ENCODE measurements at regions of chr1 and their contacts with region 1.

Region 1: GRCh38 chr1:186722711-186723309 is 42.6 kb upstream of the PTGS2 start:
- DNase-seq: peak; percentile 11
- H3K4me3 ChIP-seq: no peak overlapping the region
- H3K27ac ChIP-seq: no peak overlapping the region
- H3K27me3 ChIP-seq: no peaks in the 10 kb centered on the region
- CTCF ChIP-seq: peak; percentile 70

Region 2: GRCh38 chr1:186708613-186709203 is 14.1 kb before region 1 on chr1:
- CTCF ChIA-PET with region 1: interaction called, 15 read pairs
- POLR2A ChIA-PET with region 1: no interaction called
- DNase-seq: no peak
- H3K4me3 ChIP-seq: no peak overlapping the region
- H3K27ac ChIP-seq: no peak overlapping the region
- H3K27me3 ChIP-seq: no peaks in the 10 kb centered on the region
- CTCF ChIP-seq: no peak

Region 3: DNA sequence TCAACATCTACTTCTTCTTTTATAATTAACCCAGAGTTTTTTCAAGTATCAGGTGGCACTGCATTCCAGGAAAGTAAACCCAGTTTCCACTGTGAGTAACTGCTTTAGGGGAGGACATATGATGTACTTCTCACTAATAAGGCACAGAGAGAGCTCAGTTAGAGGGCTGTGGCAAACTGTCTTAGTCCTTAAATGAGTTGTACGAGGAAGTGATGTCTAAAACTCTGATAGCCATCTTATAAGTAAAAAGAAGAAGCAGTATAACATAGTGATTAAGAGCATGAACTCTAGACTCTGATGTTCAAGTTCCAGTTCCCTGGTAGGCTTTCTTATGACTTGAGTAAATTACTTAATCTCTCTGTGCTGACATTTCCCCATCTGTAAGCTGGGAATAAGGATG is 16.1 kb after region 1 on chr1:
- CTCF ChIA-PET with region 1: interaction called, 24 read pairs
- POLR2A ChIA-PET with region 1: no interaction called
- DNase-seq: no peak
- H3K4me3 ChIP-seq: no peak overlapping the region
- H3K27ac ChIP-seq: no peak overlapping the region
- H3K27me3 ChIP-seq: no peaks in the 10 kb centered on the region
- CTCF ChIP-seq: no peak

Region 4: GRCh38 chr1:187249196-187249595 is 526.4 kb after region 1 on chr1:
- CTCF ChIA-PET with region 1: no interaction called
- POLR2A ChIA-PET with region 1: no interaction called
- DNase-seq: no peak
- H3K4me3 ChIP-seq: no peak overlapping the region
- H3K27ac ChIP-seq: no peak overlapping the region
- H3K27me3 ChIP-seq: no peaks in the 10 kb centered on the region
- CTCF ChIP-seq: no peak

Measured in AG04450 (cell line).